Psoas muscle (tissue), 8 donors: ENCODE measurements at regions of chr5 and their contacts with region 1.

Region 1: GRCh38 chr5:95519151-95519550 is 35.6 kb downstream of the SKIC3 start:
- DNase-seq: no peak
- ATAC-seq: no peak
- H3K4me3 ChIP-seq: no peak overlapping the region
- H3K27ac ChIP-seq: no peak overlapping the region
- H3K4me1 ChIP-seq: no peaks in the 10 kb centered on the region
- H3K27me3 ChIP-seq: no peaks in the 10 kb centered on the region
- CTCF ChIP-seq: no peak

Region 2: GRCh38 chr5:95486191-95486590 is 33.0 kb before region 1 on chr5:
- intact Hi-C with region 1: loop called in 1 of 2 experiments (anchors 5 kb)
- DNase-seq: no peak
- ATAC-seq: no peak
- H3K4me3 ChIP-seq: no peak overlapping the region
- H3K27ac ChIP-seq: no peak overlapping the region
- H3K4me1 ChIP-seq: no peaks in the 10 kb centered on the region
- H3K27me3 ChIP-seq: no peaks in the 10 kb centered on the region
- CTCF ChIP-seq: no peak